H1 (cell line): ENCODE measurements at regions of chr20 and their contacts with region 1.

Region 1: DNA sequence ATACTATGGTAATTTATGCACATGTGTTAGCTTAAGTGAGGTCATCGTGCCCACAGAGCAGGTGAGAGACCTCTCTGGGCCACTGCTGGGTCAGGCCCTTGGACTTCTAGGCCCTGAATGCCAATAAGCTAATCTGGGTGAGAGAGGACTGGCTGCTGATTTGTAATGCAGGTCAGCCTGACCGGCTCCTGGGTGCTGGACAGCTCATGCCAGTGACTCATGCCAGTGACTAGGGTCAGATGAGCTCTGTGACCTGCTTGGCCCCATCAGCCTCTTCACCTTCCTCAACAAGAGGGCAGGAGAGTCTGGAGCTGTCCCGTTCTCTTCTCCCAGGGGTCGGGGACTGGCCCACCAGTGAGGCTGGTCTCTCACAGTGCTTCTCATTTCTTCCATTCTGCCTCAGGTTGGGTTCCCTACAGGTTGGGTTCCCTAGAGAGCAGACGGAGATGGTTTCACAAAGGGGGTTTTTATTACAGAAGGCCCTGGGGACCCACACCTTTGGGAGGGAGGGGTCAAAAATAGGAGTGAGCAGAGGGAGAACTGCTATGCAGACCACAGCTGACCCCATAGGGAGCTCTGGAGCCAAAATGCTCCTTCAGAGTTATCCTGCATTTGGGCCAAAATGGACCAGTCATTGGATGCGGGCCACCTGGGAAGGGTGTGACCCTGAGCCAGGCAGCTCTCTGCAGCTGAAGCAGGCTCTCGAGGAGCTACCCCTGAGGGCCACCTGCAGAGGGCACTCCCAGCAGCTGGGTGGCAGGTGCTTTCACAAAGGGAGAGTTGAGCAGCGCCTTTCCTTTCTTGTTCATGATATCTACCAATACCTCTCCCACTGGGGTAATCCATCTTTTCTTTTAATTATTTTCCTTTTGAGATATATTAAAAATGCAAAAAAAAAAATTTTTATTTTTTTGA is 2.2 kb upstream of the OXT start:
- DNase-seq: no peak
- H3K4me3 ChIP-seq: no peak overlapping the region
- H3K27ac ChIP-seq: no peak overlapping the region
- H3K4me1 ChIP-seq: peaks cover 0 to 8% (median 3%) of the 10 kb centered on the region in 4 experiments; a peak in 5 of 7 replicates
- H3K27me3 ChIP-seq: peaks cover 11 to 30% (median 26%) of the 10 kb centered on the region in 4 experiments
- CTCF ChIP-seq: peak; percentile 42 to 48 (median 46)
- EP300 ChIP-seq: no peak
- POLR2A ChIP-seq: no peak
- RAD21 ChIP-seq: peak in 1 of 2 experiments; percentile 25; a peak in 2 of 4 replicates

Region 2: DNA sequence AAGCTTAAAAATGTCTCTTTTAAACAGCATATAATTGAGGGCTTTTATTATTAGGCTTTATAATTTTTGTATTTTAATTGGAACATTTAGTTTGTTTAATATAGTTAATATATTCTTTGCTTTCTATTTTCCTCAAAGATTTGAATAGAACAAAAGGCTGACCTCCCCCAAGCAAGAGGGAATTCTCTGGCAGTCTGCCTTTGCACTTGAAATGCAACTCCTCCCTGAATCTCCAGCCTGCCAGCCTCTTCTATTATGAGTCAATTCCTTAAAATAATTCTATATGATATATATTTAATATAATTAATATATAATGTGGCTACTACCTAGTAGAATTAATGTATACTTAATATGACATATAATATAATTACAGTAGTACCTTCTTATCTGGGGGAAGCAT is 126.8 kb before region 1 on chr20:
- CTCF ChIA-PET with region 1: no interaction called
- POLR2A ChIA-PET with region 1: no interaction called
- DNase-seq: no peak
- H3K4me3 ChIP-seq: no peak overlapping the region
- H3K27ac ChIP-seq: no peak overlapping the region
- H3K4me1 ChIP-seq: peaks cover 0 to 2% (median 0%) of the 10 kb centered on the region in 4 experiments; a peak in 2 of 7 replicates
- H3K27me3 ChIP-seq: no peaks in the 10 kb centered on the region
- CTCF ChIP-seq: no peak
- EP300 ChIP-seq: no peak
- POLR2A ChIP-seq: no peak
- RAD21 ChIP-seq: no peak

Region 3: DNA sequence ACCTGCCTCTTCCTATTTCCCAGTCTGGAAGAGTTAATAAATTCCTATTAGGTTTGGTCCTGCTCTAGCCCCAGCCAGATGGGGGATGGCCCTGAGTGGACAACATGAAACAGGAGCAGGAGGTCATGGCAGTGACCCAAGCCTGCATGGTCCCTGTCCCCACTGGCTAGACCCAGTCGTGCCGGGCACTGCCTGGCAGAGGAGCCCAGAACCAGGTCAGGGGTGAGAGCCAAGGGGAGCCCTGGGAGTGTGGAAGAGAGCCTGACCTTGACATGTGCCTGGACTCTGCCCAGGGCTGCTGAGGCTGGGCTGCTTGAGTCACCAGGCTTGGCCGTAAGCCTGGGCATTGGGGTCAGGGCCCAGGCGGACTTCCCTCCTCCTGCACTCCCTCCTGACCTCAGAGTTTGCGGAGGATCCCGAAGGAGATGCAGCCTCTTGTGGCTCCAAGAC is 11.7 kb after region 1 on chr20:
- CTCF ChIA-PET with region 1: interaction called, 14 read pairs
- POLR2A ChIA-PET with region 1: interaction called, 3 read pairs
- DNase-seq: no peak
- H3K4me3 ChIP-seq: no peak overlapping the region
- H3K27ac ChIP-seq: no peak overlapping the region
- H3K4me1 ChIP-seq: peaks cover 0 to 8% (median 6%) of the 10 kb centered on the region in 4 experiments; a peak in 5 of 7 replicates
- H3K27me3 ChIP-seq: peaks cover 27 to 43% (median 37%) of the 10 kb centered on the region in 4 experiments
- CTCF ChIP-seq: no peak
- EP300 ChIP-seq: no peak
- POLR2A ChIP-seq: no peak
- RAD21 ChIP-seq: no peak

Region 4: DNA sequence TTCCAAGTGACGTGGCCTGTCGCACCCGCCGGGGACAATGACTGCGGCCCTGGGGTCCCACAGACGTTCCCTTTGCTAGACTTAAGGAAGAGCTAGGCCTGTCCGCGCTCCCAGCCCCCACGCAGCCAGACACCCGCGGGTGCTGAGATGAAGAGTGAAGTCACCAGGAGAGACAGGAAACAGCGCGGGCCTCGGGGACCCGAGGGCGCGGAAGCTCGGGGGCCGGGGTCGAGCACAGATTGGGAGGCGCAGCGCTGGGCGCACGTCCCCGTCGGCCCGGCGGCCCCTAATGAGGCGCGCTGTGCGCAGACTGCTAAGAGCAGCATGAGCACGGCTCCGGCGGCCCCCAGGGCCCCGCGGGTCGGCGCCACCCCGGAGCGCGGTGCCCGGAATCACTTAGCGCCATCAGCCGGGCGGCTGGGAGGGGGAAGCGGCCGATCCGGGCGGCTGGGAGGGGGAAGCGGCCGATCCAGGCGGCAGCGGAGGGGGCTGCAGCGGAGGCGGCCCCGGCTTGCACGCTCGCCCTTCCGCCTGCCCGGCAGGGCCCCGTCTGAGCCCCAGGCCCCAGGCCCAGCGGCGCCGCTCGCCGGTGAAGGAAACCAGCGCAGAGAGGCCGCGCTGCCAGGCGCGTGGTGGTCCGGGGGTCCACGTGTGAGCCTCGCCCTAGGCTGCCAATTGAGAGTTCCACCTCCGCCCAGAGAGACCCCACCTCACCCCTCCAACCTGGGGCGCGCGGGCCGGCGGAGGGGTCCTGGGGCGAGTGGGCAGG is 23.6 kb after region 1 on chr20:
- CTCF ChIA-PET with region 1: interaction called, 11 read pairs
- POLR2A ChIA-PET with region 1: interaction called, 6 read pairs
- DNase-seq: peak in 1 of 2 experiments; percentile 71
- H3K4me3 ChIP-seq: peak overlapping the region; percentile 9 to 61 (median 35)
- H3K27ac ChIP-seq: no peak overlapping the region
- H3K4me1 ChIP-seq: peaks cover 0 to 6% (median 2%) of the 10 kb centered on the region in 4 experiments; a peak in 2 of 7 replicates
- H3K27me3 ChIP-seq: peaks cover 2 to 21% (median 13%) of the 10 kb centered on the region in 4 experiments
- CTCF ChIP-seq: peak in 1 of 3 experiments; percentile 8; a peak in 1 of 4 replicates
- EP300 ChIP-seq: no peak
- POLR2A ChIP-seq: peak in 1 of 2 experiments; percentile 58; a peak in 2 of 3 replicates
- RAD21 ChIP-seq: no peak